B cell (primary cell): ENCODE measurements at regions of chr1 and their contacts with region 1.

Region 1: GRCh38 chr1:17502326-17502778 is 37.1 kb upstream of the ARHGEF10L start:
- DNase-seq: peak; percentile 71
- ATAC-seq: peak; percentile 73
- H3K4me3 ChIP-seq: no peak overlapping the region
- H3K4me3 Mint-ChIP-seq: no peak overlapping the region
- H3K27ac ChIP-seq: no peak overlapping the region
- H3K27ac Mint-ChIP-seq: no peak overlapping the region
- H3K4me1 ChIP-seq: no peaks in the 10 kb centered on the region
- H3K4me1 Mint-ChIP-seq: peaks cover 5% of the 10 kb centered on the region
- H3K27me3 ChIP-seq: peaks cover 0 to 10% (median 2%) of the 10 kb centered on the region in 4 experiments
- H3K27me3 Mint-ChIP-seq: peaks cover 12% of the 10 kb centered on the region
- CTCF ChIP-seq: peak; percentile 74

Region 2: GRCh38 chr1:16904560-16905111 is 597.7 kb before region 1 on chr1:
- CTCF ChIA-PET with region 1: no interaction called
- POLR2A ChIA-PET with region 1: no interaction called
- intact Hi-C with region 1: no loop called
- DNase-seq: peak; percentile 98
- ATAC-seq: peak; percentile 94
- H3K4me3 ChIP-seq: peak overlapping the region; percentile 50 to 68 (median 66)
- H3K4me3 Mint-ChIP-seq: no peak overlapping the region
- H3K27ac ChIP-seq: peak overlapping the region; percentile 96 to 99
- H3K27ac Mint-ChIP-seq: no peak overlapping the region
- H3K4me1 ChIP-seq: peaks cover 38 to 54% of the 10 kb centered on the region in 2 donors
- H3K4me1 Mint-ChIP-seq: peaks cover 34% of the 10 kb centered on the region
- H3K27me3 ChIP-seq: no peaks in the 10 kb centered on the region
- H3K27me3 Mint-ChIP-seq: no peaks in the 10 kb centered on the region
- CTCF ChIP-seq: no peak

Region 3: DNA sequence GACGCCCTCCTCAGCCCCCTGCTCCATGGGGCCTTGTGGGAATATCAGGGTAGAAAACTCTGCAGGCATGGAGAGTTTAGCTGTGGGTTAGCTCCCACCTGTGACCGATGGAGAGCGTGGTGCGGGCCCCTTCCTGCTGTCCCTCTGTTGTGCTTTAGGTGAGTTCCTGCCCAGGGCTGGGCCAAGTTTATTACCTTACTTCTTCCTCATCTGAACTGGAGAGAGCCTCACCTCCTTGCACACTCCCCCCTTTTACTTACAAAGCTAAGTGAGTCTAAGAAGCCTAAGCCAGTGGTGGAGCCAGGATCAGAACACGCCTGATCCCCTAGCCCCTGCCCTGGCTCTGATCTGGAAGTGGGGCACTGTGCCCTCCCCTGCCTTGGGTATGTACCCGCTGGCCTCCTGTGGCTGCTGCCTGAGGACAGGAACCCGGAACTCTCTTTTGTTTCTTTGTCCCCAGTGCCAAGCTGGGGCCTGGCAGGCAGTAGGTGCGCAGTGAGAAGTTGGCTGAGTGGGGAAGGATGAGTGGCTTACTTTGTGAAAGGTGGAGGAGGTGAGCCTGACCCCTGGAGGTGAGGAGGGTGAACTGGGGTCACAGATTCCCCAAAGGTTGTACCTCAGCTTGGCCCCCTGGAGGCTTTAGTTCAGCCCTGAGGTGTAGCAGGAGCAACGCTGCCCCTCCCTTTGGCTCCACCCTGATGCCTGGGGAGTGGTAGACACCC is 70.1 kb after region 1 on chr1:
- CTCF ChIA-PET with region 1: interaction called, 7 read pairs
- POLR2A ChIA-PET with region 1: no interaction called
- intact Hi-C with region 1: loop called (anchors 1 kb)
- DNase-seq: peak; percentile 35
- ATAC-seq: no peak
- H3K4me3 ChIP-seq: no peak overlapping the region
- H3K4me3 Mint-ChIP-seq: no peak overlapping the region
- H3K27ac ChIP-seq: no peak overlapping the region
- H3K27ac Mint-ChIP-seq: no peak overlapping the region
- H3K4me1 ChIP-seq: no peaks in the 10 kb centered on the region
- H3K4me1 Mint-ChIP-seq: no peaks in the 10 kb centered on the region
- H3K27me3 ChIP-seq: peaks cover 0 to 2% (median 0%) of the 10 kb centered on the region in 4 experiments
- H3K27me3 Mint-ChIP-seq: peaks cover 22% of the 10 kb centered on the region
- CTCF ChIP-seq: peak; percentile 20

Region 4: GRCh38 chr1:17606826-17607440 is 104.6 kb after region 1 on chr1:
- CTCF ChIA-PET with region 1: interaction called, 73 read pairs
- POLR2A ChIA-PET with region 1: no interaction called
- intact Hi-C with region 1: no loop called
- DNase-seq: peak; percentile 61
- ATAC-seq: no peak
- H3K4me3 ChIP-seq: no peak overlapping the region
- H3K4me3 Mint-ChIP-seq: no peak overlapping the region
- H3K27ac ChIP-seq: no peak overlapping the region
- H3K27ac Mint-ChIP-seq: no peak overlapping the region
- H3K4me1 ChIP-seq: no peaks in the 10 kb centered on the region
- H3K4me1 Mint-ChIP-seq: no peaks in the 10 kb centered on the region
- H3K27me3 ChIP-seq: no peaks in the 10 kb centered on the region
- H3K27me3 Mint-ChIP-seq: no peaks in the 10 kb centered on the region
- CTCF ChIP-seq: peak; percentile 69